Dendritic cell treated with granulocyte-macrophage colony-stimulating factor and Interleukin-4, amounts not matched to agents 40 ng/mL and 50 ng/mL, for 4 days (primary cell): ENCODE measurements at regions of chr2 and their contacts with region 1.

Region 1: DNA sequence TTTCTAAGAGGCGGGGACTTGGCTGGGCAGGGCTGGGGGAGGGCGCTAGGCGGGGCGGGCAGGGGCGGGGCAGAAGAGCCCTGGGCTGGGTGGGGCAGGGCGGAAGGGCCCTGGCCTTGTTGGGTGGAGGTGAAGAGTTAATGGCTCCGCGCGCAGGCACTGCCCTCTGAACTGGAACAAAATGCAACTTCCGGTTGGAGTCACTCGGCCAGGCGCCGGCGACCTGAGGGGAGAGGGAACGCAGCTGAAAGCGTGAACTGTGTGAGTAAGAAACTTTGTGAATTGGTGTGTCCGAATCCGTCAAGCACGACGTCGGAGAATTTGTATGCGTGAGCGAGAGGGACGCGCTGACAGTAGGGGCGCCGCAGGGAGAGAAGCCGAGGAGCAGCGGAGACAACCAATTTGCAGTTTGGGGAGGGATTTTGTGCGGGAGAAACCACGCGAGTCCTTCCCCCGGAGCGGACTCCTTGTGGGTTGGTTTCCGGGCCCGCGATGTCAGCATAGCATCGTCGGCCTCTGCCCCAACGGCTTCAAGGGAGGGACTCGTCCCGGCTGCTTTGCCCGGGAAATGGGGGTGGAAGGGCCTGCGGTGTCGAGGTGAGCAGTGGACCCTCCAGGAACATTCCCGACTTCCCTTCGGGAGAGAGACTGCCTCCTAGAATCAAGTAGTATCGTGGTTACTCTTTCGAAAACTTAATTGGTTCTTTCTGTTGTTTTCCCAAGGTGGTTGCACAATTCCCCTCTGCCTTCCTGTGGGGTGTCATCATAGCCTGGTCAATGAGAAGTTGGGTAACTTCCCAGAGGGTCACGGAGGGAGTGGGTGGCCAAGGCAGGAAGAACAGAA is at the start of gene TANK:
- H3K4me3 Mint-ChIP-seq: peak within 1 kb of the TSS; percentile 95
- H3K27ac Mint-ChIP-seq: peak within 1 kb of the TSS; percentile 98
- H3K4me1 Mint-ChIP-seq: peaks cover 32% of the 10 kb centered on the region
- H3K27me3 Mint-ChIP-seq: no peaks in the 10 kb centered on the region

Region 2: GRCh38 chr2:161077367-161078210 is 82.9 kb before region 1 on chr2:
- intact Hi-C with region 1: loop called (anchors 1 kb)
- H3K4me3 Mint-ChIP-seq: peak overlapping the region; percentile 0
- H3K27ac Mint-ChIP-seq: peak overlapping the region; percentile 91
- H3K4me1 Mint-ChIP-seq: peaks cover 29% of the 10 kb centered on the region
- H3K27me3 Mint-ChIP-seq: no peaks in the 10 kb centered on the region

Region 3: DNA sequence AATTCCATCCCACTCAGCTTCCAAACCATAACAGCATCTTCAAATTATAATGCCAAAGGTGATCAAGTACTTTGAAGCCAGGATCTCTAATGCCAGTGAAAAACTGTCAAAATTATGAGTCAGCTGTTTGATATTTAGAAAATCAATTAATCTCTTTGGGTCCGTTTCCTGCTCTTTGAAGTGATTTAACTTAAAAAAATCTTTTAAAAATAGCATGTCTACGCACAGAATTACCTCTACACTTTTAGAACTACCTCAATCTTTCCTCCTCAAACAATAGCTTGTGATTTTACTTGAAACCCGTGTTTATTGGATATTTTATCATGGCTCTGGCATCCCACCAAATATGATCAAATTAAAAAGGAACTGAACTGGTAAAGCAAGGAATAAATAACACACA is 31.6 kb before region 1 on chr2:
- intact Hi-C with region 1: loop called (anchors 5 kb)
- H3K4me3 Mint-ChIP-seq: no peak overlapping the region
- H3K27ac Mint-ChIP-seq: no peak overlapping the region
- H3K4me1 Mint-ChIP-seq: peaks cover 10% of the 10 kb centered on the region
- H3K27me3 Mint-ChIP-seq: no peaks in the 10 kb centered on the region

Region 4: GRCh38 chr2:161208527-161209139 is 48.2 kb after region 1 on chr2:
- intact Hi-C with region 1: loop called (anchors 5 kb)
- H3K4me3 Mint-ChIP-seq: no peak overlapping the region
- H3K27ac Mint-ChIP-seq: no peak overlapping the region
- H3K4me1 Mint-ChIP-seq: peaks cover 5% of the 10 kb centered on the region
- H3K27me3 Mint-ChIP-seq: no peaks in the 10 kb centered on the region